ENCODE measurements at regions of chr12 and their contacts with region 1.

Region 1: DNA sequence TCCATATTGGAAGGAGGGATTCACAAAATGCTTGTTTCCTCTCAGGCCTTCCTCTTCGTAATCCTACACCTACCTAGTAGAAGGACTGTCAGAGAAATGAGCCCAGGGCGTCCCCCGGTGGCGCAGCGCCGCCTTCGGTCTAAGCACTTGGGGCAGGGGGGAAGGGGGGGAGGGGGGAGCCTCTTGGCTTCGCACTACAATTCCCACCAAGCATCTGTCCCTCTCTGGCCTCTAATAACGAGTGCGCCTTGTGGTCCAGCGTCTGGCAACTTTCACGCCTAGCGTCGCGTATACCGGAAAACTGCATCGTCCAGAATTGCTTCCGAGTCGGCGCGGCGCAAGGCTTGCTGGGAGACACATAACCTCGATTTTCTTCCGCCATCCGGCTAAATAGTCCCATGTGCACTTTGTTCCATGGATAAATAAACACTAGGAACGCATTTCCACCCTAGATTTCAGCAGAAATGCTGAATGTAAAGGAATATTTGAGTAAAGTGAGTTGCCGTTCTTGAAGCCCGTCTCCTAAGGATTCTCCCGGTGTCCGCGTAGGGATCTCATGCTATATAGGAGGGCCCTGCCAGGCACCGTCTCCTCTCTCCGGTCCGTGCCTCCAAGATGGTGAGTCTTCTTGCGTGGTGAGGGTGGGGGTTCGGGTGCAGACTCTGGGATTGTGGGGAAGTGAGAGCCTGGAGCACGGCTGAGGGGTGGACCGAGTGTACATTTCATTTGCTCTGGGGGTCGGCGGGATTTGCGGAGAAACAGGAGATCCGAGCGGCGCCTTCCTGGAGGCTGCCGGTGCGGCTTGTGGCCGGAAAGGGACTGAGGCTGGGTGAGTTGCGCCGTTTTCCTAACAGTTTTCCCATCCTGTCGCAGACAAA is at the start of gene RPS26:
- H3K4me3 ChIP-seq: peak within 1 kb of the TSS; percentile 75
- H3K27ac ChIP-seq: peak within 1 kb of the TSS; percentile 93
- H3K4me1 ChIP-seq: peaks cover 19% of the 10 kb centered on the region
- CTCF ChIP-seq: peak; percentile 57

Region 2: DNA sequence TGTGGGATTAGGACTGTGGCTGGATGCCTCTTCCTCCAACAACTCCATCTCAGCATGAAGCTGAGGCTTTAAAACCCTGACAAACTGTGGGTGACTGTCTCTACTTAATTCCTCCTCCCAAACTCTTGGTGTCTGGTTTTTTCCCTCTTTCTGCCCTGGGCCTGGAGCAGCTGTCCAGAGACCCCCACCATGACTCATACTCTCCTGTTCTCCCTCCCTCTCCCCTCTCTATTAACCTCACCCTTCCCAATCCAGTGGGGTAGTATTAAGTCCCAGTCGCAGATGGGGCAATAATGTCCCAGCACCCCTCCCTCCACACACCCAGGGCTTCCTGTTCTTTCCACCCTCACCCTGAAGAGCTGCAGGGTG is 210.4 kb before region 1 on chr12:
- CTCF ChIA-PET with region 1: no interaction called
- POLR2A ChIA-PET with region 1: no interaction called
- H3K4me3 ChIP-seq: peak overlapping the region; percentile 83; the same call in 1 of the 2 replicates
- H3K27ac ChIP-seq: no peak overlapping the region
- H3K4me1 ChIP-seq: peaks cover 12% of the 10 kb centered on the region
- CTCF ChIP-seq: no peak

Region 3: GRCh38 chr12:56029666-56030293 is 12.0 kb before region 1 on chr12:
- CTCF ChIA-PET with region 1: interaction called, 33 read pairs
- POLR2A ChIA-PET with region 1: interaction called, 3 read pairs
- H3K4me3 ChIP-seq: no peak overlapping the region
- H3K27ac ChIP-seq: no peak overlapping the region
- H3K4me1 ChIP-seq: no peaks in the 10 kb centered on the region
- CTCF ChIP-seq: no peak

Region 4: GRCh38 chr12:56071648-56072047 is 29.9 kb after region 1 on chr12:
- CTCF ChIA-PET with region 1: interaction called, 11 read pairs
- POLR2A ChIA-PET with region 1: no interaction called
- H3K4me3 ChIP-seq: no peak overlapping the region
- H3K27ac ChIP-seq: no peak overlapping the region
- H3K4me1 ChIP-seq: no peaks in the 10 kb centered on the region
- CTCF ChIP-seq: no peak